ENCODE measurements at regions of chr5 and their contacts with region 1.

Region 1: GRCh38 chr5:123423278-123424149 is at the start of gene CEP120:
- DNase-seq: peak; percentile 86 to 98 (median 96)
- ATAC-seq: peak; percentile 98
- H3K4me3 ChIP-seq: peak within 1 kb of the TSS; percentile 73
- H3K4me3 Mint-ChIP-seq: no peak within 1 kb of the TSS
- H3K27ac ChIP-seq: peak within 1 kb of the TSS; percentile 97
- H3K27ac Mint-ChIP-seq: peak within 1 kb of the TSS in 2 of 9 donors; percentile 99 to 100
- H3K4me1 ChIP-seq: peaks cover 26 to 29% of the 10 kb centered on the region in 2 donors
- H3K4me1 Mint-ChIP-seq: peaks cover 11 to 27% (median 20%) of the 10 kb centered on the region in 7 donors
- H3K27me3 ChIP-seq: no peaks in the 10 kb centered on the region
- H3K27me3 Mint-ChIP-seq: no peaks in the 10 kb centered on the region
- total RNA-seq, gene CEP120: 35.0 to 74.6 (median 60.0) TPM

Region 2: GRCh38 chr5:121962347-121962670 is 1461.2 kb before region 1 on chr5:
- CTCF ChIA-PET with region 1: no interaction called
- POLR2A ChIA-PET with region 1: interaction called, 8 read pairs
- intact Hi-C with region 1: loop called (anchors 1 kb)
- DNase-seq: no peak
- ATAC-seq: no peak
- H3K4me3 ChIP-seq: peak overlapping the region; percentile 85
- H3K4me3 Mint-ChIP-seq: peak overlapping the region; percentile 95 to 99 (median 98)
- H3K27ac ChIP-seq: peak overlapping the region; percentile 73
- H3K27ac Mint-ChIP-seq: peak overlapping the region; percentile 93 to 98 (median 96)
- H3K4me1 ChIP-seq: peaks cover 9 to 16% of the 10 kb centered on the region in 2 donors
- H3K4me1 Mint-ChIP-seq: peaks cover 30 to 51% (median 47%) of the 10 kb centered on the region in 7 donors
- H3K27me3 ChIP-seq: no peaks in the 10 kb centered on the region
- H3K27me3 Mint-ChIP-seq: peaks cover 0 to 21% (median 9%) of the 10 kb centered on the region in 5 donors

Region 3: DNA sequence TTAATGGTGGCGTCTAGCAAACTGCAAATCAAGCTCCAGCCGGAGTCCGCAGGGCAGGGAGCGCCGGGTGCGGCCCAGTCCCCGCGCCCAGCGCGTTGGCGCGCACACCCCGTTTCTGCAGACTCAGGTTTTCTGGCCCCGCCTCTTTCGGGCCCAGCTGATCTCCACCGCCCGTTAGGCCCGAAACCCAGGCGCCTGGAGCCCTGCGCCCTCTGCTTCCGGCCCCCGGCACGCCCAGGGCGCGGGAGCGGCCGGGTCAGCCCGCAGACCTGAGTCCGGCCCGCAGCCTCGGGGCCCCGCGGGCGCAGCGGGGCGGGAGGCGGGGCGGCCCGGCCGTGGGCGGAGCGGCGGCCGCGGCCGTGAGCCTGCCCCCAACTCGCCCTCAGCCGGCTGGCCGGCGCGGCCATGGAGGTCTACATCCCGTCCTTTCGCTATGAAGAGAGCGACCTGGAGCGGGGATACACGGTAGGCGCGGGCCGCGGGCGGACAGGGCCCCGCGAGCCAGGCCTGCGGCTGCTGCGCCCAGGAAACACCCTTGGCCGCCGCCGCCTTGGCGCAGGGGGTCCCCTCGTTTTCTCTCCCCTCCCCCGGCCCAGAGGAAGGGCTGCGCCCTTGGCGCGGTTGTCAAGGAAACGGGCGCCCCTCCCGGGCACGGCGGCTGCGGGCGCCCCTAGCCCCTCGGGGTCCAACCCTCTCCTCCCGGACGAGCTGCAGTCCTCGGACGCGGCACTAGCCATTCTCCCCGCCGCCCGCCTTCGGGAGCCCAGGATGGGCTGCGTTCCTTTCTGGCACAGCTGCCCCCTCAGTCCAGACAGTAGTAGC is 578.1 kb before region 1 on chr5 and contains the start of gene SNX24:
- CTCF ChIA-PET with region 1: no interaction called
- POLR2A ChIA-PET with region 1: interaction called, 7 read pairs
- intact Hi-C with region 1: loop called (anchors 1 to 10 kb)
- DNase-seq: peak; percentile 52 to 67 (median 63)
- ATAC-seq: peak; percentile 88
- H3K4me3 ChIP-seq: peak within 1 kb of the TSS; percentile 82
- H3K4me3 Mint-ChIP-seq: peak within 1 kb of the TSS; percentile 83 to 93 (median 89)
- H3K27ac ChIP-seq: peak within 1 kb of the TSS; percentile 65
- H3K27ac Mint-ChIP-seq: peak within 1 kb of the TSS; percentile 38 to 90 (median 78)
- H3K4me1 ChIP-seq: peaks cover 10 to 11% of the 10 kb centered on the region in 2 donors
- H3K4me1 Mint-ChIP-seq: peaks cover 19 to 40% (median 27%) of the 10 kb centered on the region in 7 donors
- H3K27me3 ChIP-seq: no peaks in the 10 kb centered on the region
- H3K27me3 Mint-ChIP-seq: peaks cover 3 to 35% (median 9%) of the 10 kb centered on the region in 5 donors
- total RNA-seq, gene SNX24: 1.3 to 3.5 (median 2.4) TPM

Region 4: GRCh38 chr5:123448017-123448617 is 24.6 kb after region 1 on chr5:
- CTCF ChIA-PET with region 1: no interaction called
- POLR2A ChIA-PET with region 1: interaction called, 5 read pairs
- intact Hi-C with region 1: loop called in 1 of 2 experiments (anchors 1 kb)
- DNase-seq: no peak
- ATAC-seq: no peak
- H3K4me3 ChIP-seq: no peak overlapping the region
- H3K4me3 Mint-ChIP-seq: peak overlapping the region in 1 of 10 donors; percentile 61
- H3K27ac ChIP-seq: no peak overlapping the region
- H3K27ac Mint-ChIP-seq: peak overlapping the region in 3 of 9 donors; percentile 10 to 69 (median 55)
- H3K4me1 ChIP-seq: no peaks in the 10 kb centered on the region
- H3K4me1 Mint-ChIP-seq: peaks cover 0 to 33% (median 6%) of the 10 kb centered on the region in 7 donors
- H3K27me3 ChIP-seq: no peaks in the 10 kb centered on the region
- H3K27me3 Mint-ChIP-seq: peaks cover 0 to 10% (median 0%) of the 10 kb centered on the region in 5 donors

Region 5: DNA sequence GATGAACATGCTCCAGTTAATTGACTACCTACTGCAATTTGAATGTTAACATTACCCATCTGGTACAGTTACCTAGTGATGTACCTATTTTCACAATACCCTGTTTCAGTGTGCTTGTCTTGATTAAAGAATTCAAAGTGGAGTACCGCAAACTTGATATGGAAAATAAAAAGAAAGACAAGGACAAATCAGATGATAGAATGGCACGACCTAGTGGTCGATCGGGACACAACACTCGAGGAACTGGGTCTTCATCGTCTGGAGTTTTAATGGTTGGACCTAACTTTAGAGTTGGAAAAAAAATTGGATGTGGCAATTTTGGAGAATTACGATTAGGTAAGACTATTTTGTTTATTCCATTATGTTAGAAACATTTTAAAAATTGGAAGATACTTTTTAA is 122.0 kb after region 1 on chr5:
- CTCF ChIA-PET with region 1: no interaction called
- POLR2A ChIA-PET with region 1: interaction called, 9 read pairs
- intact Hi-C with region 1: loop called (anchors 1 kb)
- DNase-seq: peak in 7 of 9 donors; percentile 2 to 27 (median 9)
- ATAC-seq: no peak
- H3K4me3 ChIP-seq: no peak overlapping the region
- H3K4me3 Mint-ChIP-seq: no peak overlapping the region
- H3K27ac ChIP-seq: no peak overlapping the region
- H3K27ac Mint-ChIP-seq: no peak overlapping the region
- H3K4me1 ChIP-seq: peaks cover 9 to 19% of the 10 kb centered on the region in 2 donors
- H3K4me1 Mint-ChIP-seq: peaks cover 35 to 79% (median 56%) of the 10 kb centered on the region in 7 donors
- H3K27me3 ChIP-seq: no peaks in the 10 kb centered on the region
- H3K27me3 Mint-ChIP-seq: no peaks in the 10 kb centered on the region

Region 6: DNA sequence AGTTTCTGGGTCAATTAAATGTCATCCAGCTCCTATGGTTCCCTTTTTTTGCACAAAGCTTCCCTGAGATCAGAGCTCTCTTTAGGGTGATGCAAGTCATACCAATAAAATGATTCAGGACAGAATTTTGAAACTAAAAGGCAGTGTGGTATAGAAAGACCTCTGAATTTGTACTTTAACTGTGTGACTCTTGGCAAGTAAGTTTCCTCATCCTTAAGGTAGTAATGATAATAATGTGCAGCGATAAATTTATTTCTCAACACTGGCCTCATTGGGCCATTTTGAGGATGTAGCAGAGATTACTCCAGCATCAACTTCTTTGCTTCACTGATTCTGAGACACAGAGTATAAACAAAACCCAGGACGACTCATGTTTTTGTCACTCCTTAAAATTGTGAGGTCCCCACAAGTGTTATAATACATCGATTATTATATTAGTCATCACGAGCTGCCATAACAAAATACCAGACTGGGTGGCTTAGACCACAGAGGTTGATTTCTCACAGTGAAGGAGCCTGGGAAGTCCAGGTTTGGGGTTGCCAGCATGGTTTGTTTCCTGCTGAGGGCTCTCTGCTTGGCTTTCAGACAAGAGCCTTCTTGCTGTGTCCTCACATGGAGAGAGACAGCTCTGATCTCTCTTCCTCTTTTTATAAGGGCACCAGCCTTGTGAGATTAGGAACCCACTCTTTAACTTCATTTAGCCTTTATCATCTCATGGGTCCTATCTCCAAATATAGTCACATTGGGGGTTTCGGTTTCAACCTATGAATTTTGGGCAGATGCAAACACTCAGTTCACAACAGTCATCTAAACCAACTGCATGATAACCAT is 1029.9 kb after region 1 on chr5:
- CTCF ChIA-PET with region 1: no interaction called
- POLR2A ChIA-PET with region 1: no interaction called
- intact Hi-C with region 1: no loop called
- DNase-seq: no peak
- ATAC-seq: peak; percentile 61
- H3K4me3 ChIP-seq: no peak overlapping the region
- H3K4me3 Mint-ChIP-seq: no peak overlapping the region
- H3K27ac ChIP-seq: no peak overlapping the region
- H3K27ac Mint-ChIP-seq: no peak overlapping the region
- H3K4me1 ChIP-seq: no peaks in the 10 kb centered on the region
- H3K4me1 Mint-ChIP-seq: no peaks in the 10 kb centered on the region
- H3K27me3 ChIP-seq: no peaks in the 10 kb centered on the region
- H3K27me3 Mint-ChIP-seq: peaks cover 0 to 11% (median 0%) of the 10 kb centered on the region in 5 donors